GM12878 (cell line): ENCODE measurements at regions of chr12 and their contacts with region 1.

Region 1: GRCh38 chr12:48105862-48106680 is at the start of gene SENP1:
- DNase-seq: peak; percentile 75
- ATAC-seq: peak; percentile 82
- H3K4me3 ChIP-seq: peak within 1 kb of the TSS; percentile 97
- H3K27ac ChIP-seq: peak within 1 kb of the TSS; percentile 99
- H3K4me1 ChIP-seq: peaks cover 23% of the 10 kb centered on the region
- H3K27me3 ChIP-seq: no peaks in the 10 kb centered on the region
- CTCF ChIP-seq: peak in 1 of 3 experiments; percentile 12; a peak in 1 of 6 replicates
- EP300 ChIP-seq: peak in 1 of 2 experiments; percentile 65; a peak in 2 of 4 replicates
- POLR2A ChIP-seq: peak; percentile 71
- RAD21 ChIP-seq: no peak
- polyA plus RNA-seq, gene SENP1: 8.1 to 12.5 TPM

Region 2: DNA sequence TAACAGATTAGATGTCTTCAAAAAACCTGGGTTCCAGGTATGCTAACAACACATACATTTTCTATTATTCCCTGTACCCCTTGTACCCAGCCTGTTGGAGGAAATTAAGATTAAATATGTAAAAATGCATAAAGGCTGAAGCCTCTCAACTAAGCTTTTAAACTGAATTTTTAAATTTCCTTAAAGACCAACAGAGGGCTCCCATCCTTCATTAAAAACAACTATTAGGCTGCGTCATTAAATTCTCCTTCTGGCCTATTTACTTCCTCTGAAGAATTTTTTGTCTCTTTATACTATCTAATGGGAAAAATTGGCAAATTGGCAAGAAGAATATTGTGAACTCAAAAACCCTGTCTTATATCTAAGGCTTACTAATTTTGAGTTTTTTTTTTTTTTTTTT is 22.0 kb before region 1 on chr12:
- CTCF ChIA-PET with region 1: interaction called, 7 read pairs
- POLR2A ChIA-PET with region 1: interaction called, 6 read pairs
- RAD21 ChIA-PET with region 1: interaction called, 3 read pairs
- SMC1A ChIA-PET with region 1: interaction called, 17 read pairs
- in situ Hi-C with region 1: no loop called
- intact Hi-C with region 1: no loop called
- DNase-seq: no peak
- ATAC-seq: no peak
- H3K4me3 ChIP-seq: no peak overlapping the region
- H3K27ac ChIP-seq: no peak overlapping the region
- H3K4me1 ChIP-seq: no peaks in the 10 kb centered on the region; the same call in 1 of the 2 replicates
- H3K27me3 ChIP-seq: no peaks in the 10 kb centered on the region; a peak in 1 of 4 replicates
- CTCF ChIP-seq: no peak; a peak in 1 of 6 replicates
- EP300 ChIP-seq: no peak
- POLR2A ChIP-seq: no peak
- RAD21 ChIP-seq: peak; percentile 28

Region 3: GRCh38 chr12:48119078-48119833 is 13.2 kb after region 1 on chr12 and contains the start of gene PFKM:
- CTCF ChIA-PET with region 1: interaction called, 19 read pairs
- POLR2A ChIA-PET with region 1: interaction called, 17 read pairs
- RAD21 ChIA-PET with region 1: interaction called, 8 read pairs
- SMC1A ChIA-PET with region 1: interaction called, 27 read pairs
- in situ Hi-C with region 1: no loop called
- intact Hi-C with region 1: no loop called
- DNase-seq: peak; percentile 76
- ATAC-seq: peak; percentile 100
- H3K4me3 ChIP-seq: peak within 1 kb of the TSS; percentile 88
- H3K27ac ChIP-seq: peak within 1 kb of the TSS; percentile 91
- H3K4me1 ChIP-seq: peaks cover 6% of the 10 kb centered on the region
- H3K27me3 ChIP-seq: no peaks in the 10 kb centered on the region
- CTCF ChIP-seq: no peak
- EP300 ChIP-seq: no peak
- POLR2A ChIP-seq: peak; percentile 40; the same call in 1 of the 2 replicates
- RAD21 ChIP-seq: no peak
- polyA plus RNA-seq, gene PFKM: 27.6 to 39.0 TPM